Head of caudate nucleus (tissue), 42 donors: ENCODE measurements at regions of chrX and their contacts with region 1.

Region 1: GRCh38 chrX:119574394-119575266 is at the start of gene UBE2A:
- DNase-seq: peak; percentile 71 to 94 (median 84)

Region 2: DNA sequence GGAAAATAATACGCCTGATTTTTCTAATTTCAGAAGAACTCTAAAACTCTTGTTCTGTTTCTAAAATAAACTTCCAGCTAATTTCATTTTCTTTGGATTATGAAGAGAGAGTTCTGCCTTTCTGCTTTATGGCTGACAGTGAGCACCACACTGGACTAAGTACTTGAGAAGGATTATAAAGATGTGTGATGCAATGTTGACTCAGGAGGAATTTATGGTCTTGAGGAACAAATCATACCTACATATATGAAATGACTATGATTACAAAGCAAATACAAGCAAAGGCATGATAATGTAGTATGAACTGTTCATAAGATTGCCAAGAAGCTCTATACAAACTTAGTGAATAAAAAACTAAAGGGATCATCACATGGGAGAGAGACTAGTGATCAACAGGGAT is 119.4 kb before region 1 on chrX:
- intact Hi-C with region 1: no loop called
- DNase-seq: no peak

Region 3: DNA sequence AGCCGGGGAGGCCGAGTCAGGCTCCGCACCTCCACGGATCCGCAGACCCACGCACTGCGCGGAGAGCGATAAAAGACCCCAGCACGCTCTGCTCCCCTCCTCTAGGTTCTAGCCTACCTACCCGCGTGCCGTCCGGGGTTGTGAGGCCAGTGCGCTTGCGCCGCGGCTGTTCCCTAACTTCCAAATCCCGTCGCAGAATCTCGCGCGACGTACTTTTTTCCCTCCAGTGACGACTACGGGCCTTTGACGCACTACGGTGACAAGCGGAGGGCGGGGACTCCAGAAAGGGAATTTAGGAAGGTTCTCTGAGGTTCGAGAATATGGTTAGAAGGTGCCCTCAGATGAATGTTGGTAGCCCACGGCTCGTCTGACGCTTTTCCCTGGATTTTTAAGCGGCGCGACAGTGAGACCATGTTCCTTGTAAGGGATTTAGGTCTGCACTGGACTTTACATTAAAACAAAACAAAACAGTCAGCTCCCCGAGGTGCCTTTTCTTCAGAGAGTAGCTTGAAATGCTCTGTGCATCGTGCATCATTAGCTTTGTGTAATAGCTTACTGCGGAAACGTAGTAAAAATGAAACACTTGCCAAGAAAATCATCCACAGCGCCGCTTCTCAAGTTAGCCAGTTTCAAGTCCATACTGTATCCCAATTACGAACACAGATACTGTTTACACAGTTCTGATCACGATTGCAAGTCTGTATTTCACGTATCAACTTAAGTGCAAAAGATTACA is 31.8 kb after region 1 on chrX and contains the start of gene NKRF:
- intact Hi-C with region 1: loop called (anchors 5 kb)
- DNase-seq: peak; percentile 78 to 93 (median 87)